Activated T-helper 1 cell treated with anti-CD3 and anti-CD28 coated beads, Interleukin-12 subunit alpha, Interleukin-12 subunit beta, Interleukin-2, Interleukin-4 antibody, amounts not matched to agents 30 ng/mL and 10 ng/mL and 1 ng/mL, durations not matched to agents 14 hours and 24 hours and 36 hours (primary cell): ENCODE measurements at regions of chr12 and their contacts with region 1.

Region 1: GRCh38 chr12:71685914-71686665 is at the start of gene TMEM19:
- DNase-seq: peak; percentile 78
- H3K4me3 Mint-ChIP-seq: peak within 1 kb of the TSS; percentile 94
- H3K27ac Mint-ChIP-seq: peak within 1 kb of the TSS; percentile 93
- H3K4me1 Mint-ChIP-seq: peaks cover 23% of the 10 kb centered on the region
- H3K27me3 Mint-ChIP-seq: no peaks in the 10 kb centered on the region
- total RNA-seq, gene TMEM19: 10.6 and 11.3 TPM in 2 replicates

Region 2: GRCh38 chr12:69738351-69739286 is 1947.5 kb before region 1 on chr12 and contains the start of gene RAB3IP:
- intact Hi-C with region 1: loop called (anchors 5 kb)
- DNase-seq: peak; percentile 88
- H3K4me3 Mint-ChIP-seq: peak within 1 kb of the TSS; percentile 95
- H3K27ac Mint-ChIP-seq: peak within 1 kb of the TSS; percentile 92
- H3K4me1 Mint-ChIP-seq: peaks cover 31% of the 10 kb centered on the region
- H3K27me3 Mint-ChIP-seq: peaks cover 36% of the 10 kb centered on the region
- total RNA-seq, gene RAB3IP: 29.8 and 36.1 TPM in 2 replicates

Region 3: GRCh38 chr12:70365648-70366518 is 1320.2 kb before region 1 on chr12 and contains the start of gene KCNMB4:
- intact Hi-C with region 1: loop called (anchors 10 kb)
- DNase-seq: peak; percentile 71
- H3K4me3 Mint-ChIP-seq: peak within 1 kb of the TSS; percentile 87
- H3K27ac Mint-ChIP-seq: peak within 1 kb of the TSS; percentile 63
- H3K4me1 Mint-ChIP-seq: peaks cover 20% of the 10 kb centered on the region
- H3K27me3 Mint-ChIP-seq: peaks cover 44% of the 10 kb centered on the region
- total RNA-seq, gene KCNMB4: 0.17 and 0.80 TPM in 2 replicates

Region 4: DNA sequence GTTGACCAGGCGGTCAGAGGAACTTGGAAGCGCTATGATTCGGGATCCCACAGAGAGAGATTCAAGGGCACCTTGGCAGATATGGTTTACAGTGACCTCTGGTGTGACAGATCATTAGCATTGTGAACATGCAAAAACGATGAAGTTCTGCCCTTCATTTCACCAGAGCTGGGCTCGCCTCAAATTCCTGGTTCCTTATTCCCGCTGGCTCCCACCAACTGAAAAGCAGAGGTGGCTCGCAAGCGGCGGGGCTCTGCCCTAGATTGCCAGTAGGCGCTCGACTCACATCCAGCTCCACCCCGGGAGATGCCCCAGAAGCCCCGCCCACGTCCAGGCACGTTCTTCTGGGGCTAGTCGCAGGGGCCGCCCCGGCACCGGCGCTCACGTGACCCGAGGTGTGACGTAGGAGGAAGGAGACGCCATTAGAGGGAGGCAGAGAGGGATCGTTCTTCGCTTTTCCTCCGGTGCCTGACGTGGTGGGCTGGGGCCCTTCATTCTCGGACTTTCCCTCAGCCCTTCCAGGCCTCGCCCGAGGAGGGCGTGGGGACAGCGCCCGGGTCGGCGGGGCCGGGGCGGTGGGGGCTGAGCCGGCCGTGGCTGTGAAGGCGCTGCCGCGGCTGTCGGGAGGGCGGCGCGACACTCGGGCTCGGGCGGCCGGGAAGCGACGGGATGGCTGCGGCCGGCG is 68.5 kb after region 1 on chr12 and contains the start of gene RAB21:
- intact Hi-C with region 1: loop called (anchors 1 kb)
- DNase-seq: peak; percentile 97
- H3K4me3 Mint-ChIP-seq: peak within 1 kb of the TSS; percentile 93
- H3K27ac Mint-ChIP-seq: peak within 1 kb of the TSS; percentile 97
- H3K4me1 Mint-ChIP-seq: peaks cover 22% of the 10 kb centered on the region
- H3K27me3 Mint-ChIP-seq: peaks cover 27% of the 10 kb centered on the region
- total RNA-seq, gene RAB21: 100 and 105 TPM in 2 replicates